Mammary epithelial cell (primary cell): ENCODE measurements at regions of chr2 and their contacts with region 1.

Region 1: DNA sequence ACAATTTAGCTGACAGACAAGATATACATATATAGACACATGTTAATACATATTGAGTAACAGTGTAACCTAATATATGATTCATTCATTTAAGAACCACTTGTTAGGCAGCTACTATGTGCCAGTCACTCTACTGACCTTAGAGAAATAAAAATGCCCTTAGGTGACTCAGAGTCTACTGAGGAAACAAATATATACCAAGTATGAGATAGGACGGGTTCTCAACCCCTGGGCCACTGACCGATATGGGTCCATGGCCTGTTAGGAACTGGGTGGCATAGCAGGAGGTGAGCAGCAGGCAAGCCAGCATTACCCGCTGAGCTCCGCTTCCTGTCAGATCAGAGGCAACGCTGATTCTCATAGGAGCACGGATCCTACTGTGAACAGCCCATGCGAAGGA is 14.8 kb downstream of the STRN start:
- DNase-seq: peak; percentile 70
- H3K4me3 ChIP-seq: no peak overlapping the region
- H3K27ac ChIP-seq: peak overlapping the region; percentile 91
- H3K4me1 ChIP-seq: peaks cover 24% of the 10 kb centered on the region
- H3K27me3 ChIP-seq: no peaks in the 10 kb centered on the region
- CTCF ChIP-seq: no peak

Region 2: GRCh38 chr2:36797324-36798070 is 154.1 kb before region 1 on chr2:
- CTCF ChIA-PET with region 1: no interaction called
- dilution Hi-C with region 1: no loop called
- in situ Hi-C with region 1: no loop called
- intact Hi-C with region 1: no loop called
- DNase-seq: no peak
- H3K4me3 ChIP-seq: no peak overlapping the region
- H3K27ac ChIP-seq: no peak overlapping the region
- H3K4me1 ChIP-seq: no peaks in the 10 kb centered on the region
- H3K27me3 ChIP-seq: no peaks in the 10 kb centered on the region
- CTCF ChIP-seq: no peak

Region 3: DNA sequence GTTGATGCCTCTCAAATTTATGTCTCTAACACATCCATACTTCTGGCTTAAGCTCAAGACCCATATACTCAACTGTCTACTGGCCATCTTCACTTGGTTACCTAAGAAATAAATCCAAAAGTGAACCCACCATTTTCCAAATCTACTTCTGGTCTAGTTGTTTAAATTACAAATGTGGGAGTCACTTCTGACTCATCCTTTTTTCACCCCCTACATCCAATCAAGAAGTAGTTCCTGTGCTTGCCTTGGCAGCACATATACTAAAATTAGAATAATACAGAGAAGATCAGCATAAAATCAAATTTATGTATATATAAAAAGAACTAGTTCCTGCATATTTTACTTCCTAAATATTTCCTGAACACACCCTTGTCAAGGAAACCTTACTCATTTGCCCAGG is 38.9 kb before region 1 on chr2:
- CTCF ChIA-PET with region 1: interaction called, 19 read pairs
- dilution Hi-C with region 1: no loop called
- in situ Hi-C with region 1: no loop called
- intact Hi-C with region 1: no loop called
- DNase-seq: no peak
- H3K4me3 ChIP-seq: no peak overlapping the region
- H3K27ac ChIP-seq: no peak overlapping the region
- H3K4me1 ChIP-seq: peaks cover 5% of the 10 kb centered on the region
- H3K27me3 ChIP-seq: no peaks in the 10 kb centered on the region
- CTCF ChIP-seq: no peak